ENCODE measurements at regions of chr1 and their contacts with region 1.

Region 1: DNA sequence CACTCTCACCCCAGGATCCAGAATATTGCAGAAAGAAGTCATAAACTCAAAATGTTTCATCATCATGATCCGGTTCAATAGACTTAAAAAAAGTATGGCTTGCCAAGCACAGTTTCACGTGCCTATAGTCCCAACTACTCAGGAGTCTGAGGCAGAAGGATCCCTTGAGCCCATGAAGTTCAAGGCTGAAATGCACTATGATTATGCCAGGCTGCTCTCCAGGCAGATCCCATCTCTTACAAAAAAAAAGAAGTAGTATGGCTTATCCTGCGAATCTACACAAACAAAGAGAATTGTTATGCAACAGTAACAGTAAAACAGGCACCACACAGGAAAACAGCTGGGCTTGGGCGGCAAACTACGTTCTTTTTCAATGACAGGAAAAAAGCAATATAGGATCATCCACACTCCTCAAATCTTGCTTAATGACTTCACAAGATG is 76.2 kb downstream of the EIF4G3 start:
- DNase-seq: no peak
- ATAC-seq: no peak
- H3K4me3 ChIP-seq: no peak overlapping the region
- H3K27ac ChIP-seq: no peak overlapping the region
- H3K4me1 ChIP-seq: peaks cover 9% of the 10 kb centered on the region; the same call in 1 of the 2 replicates
- H3K27me3 ChIP-seq: no peaks in the 10 kb centered on the region
- CTCF ChIP-seq: no peak

Region 2: DNA sequence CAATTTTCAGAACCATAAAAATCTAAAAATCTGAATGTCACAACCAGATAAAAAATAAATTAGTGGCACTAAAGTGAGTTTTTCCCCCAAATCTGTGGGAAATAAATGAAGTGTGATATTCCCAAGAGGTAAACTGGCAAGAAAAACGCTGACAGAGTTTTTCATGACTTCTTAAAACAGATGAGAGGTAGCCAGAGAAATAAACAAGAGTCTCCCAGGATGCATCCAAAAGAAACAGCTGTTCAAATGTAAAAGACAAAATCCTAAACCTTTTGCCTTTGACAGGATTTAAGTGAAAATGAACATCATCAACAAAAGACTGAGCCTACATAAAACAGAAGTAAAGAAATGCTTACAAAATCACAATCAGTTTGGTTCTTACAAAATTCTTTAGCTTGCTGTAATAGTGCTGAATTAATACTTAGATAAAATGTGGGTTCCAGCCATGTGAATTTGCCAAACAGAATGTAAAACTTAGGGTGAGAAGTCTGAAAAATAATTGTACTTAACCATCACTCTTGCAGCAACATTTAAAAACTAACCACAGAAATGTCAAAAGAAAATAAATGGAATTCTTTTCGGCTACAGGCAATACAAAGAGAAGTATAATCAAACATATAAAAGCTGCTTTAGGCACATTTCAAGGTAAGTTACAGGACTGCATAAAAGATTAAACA is 57.4 kb before region 1 on chr1:
- CTCF ChIA-PET with region 1: no interaction called
- POLR2A ChIA-PET with region 1: no interaction called
- intact Hi-C with region 1: loop called (anchors 10 kb)
- DNase-seq: no peak
- ATAC-seq: no peak
- H3K4me3 ChIP-seq: no peak overlapping the region
- H3K27ac ChIP-seq: no peak overlapping the region
- H3K4me1 ChIP-seq: no peaks in the 10 kb centered on the region
- H3K27me3 ChIP-seq: no peaks in the 10 kb centered on the region
- CTCF ChIP-seq: no peak

Region 3: GRCh38 chr1:21154717-21155116 is 54.2 kb after region 1 on chr1:
- CTCF ChIA-PET with region 1: no interaction called
- POLR2A ChIA-PET with region 1: no interaction called
- intact Hi-C with region 1: no loop called
- DNase-seq: no peak
- ATAC-seq: no peak
- H3K4me3 ChIP-seq: no peak overlapping the region
- H3K27ac ChIP-seq: no peak overlapping the region
- H3K4me1 ChIP-seq: peaks cover 12% of the 10 kb centered on the region
- H3K27me3 ChIP-seq: no peaks in the 10 kb centered on the region
- CTCF ChIP-seq: no peak

Measured in PC-3 (cell line).